Head of caudate nucleus (tissue), 42 donors: ENCODE measurements at regions of chr12 and their contacts with region 1.

Region 1: DNA sequence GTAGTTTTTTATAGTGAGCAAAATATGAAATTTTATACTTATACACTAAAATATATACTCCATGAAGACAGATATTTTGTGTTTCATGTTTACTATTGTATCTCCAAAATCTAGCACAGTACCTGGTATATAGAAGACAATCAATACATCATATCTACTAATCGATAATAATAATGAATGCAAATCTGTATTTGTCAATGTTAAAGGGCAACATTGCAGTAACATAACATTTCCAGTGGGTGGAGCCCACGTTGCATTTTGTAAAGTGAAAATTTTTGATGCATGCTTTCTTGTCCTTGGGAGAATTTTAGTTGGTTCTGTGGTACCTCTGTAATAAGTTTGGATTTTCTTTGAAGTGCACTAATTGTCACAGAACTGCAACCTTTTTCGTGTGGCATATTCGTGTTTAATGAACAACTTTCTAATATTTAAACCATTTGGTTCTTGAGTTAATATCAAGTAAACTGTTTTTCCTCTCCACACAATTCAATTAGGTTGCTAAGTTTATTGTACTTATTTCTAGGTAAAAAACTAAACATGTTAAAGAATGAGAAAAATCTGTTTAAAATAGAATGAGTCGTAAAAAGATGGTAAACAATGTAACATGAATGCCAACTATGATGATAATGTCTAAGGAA is 47.4 kb downstream of the AVPR1A start:
- DNase-seq: peak in 20 of 42 donors; percentile 3 to 58 (median 25)

Region 2: GRCh38 chr12:63802012-63802608 is 698.5 kb after region 1 on chr12:
- intact Hi-C with region 1: loop called (anchors 10 kb)
- DNase-seq: peak in 1 of 42 donors; percentile 37